Stomach (tissue), 19 donors: ENCODE measurements at regions of chr19 and their contacts with region 1.

Region 1: DNA sequence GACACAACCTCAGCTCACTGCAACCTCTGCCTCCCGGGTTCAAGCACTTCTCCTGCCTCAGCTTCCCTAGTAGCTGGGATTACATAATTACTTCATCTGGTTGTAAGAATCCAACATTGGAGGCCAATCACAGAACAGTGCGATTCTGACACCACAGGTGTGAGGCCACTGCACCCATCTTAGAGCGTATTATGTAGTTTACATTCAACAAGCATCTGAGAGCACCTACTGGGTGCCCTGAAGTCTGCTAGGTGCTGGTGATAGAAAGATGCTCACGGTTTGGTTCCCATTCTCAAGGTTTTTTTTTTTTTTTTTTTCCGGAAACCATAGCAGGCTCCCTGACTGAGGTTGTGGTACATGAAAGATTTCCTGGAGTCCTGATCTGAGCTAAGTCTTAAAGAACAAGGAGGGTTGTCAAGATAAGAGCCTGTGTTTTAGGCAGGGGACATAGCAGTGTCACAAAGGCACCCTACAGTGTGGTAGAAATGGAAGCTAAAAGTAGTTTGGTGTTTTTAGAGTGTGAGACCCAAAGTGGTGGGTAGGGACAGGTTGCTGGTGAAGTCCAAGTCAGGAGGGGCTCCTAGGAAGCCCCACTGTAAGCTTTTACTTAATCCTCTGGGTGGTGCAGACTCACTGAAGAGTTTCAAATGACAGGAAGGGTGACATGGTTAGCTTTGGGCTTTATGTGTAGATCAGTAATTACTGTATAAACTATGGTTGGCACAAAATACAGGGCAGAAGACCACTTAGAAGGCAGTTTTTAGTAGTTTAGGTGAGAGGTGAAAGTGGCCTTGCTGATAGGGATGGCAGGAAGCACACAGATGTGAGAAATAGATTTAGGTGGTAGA is 15.2 kb downstream of the SAE1 start:
- DNase-seq: peak in 1 of 2 donors; percentile 12
- H3K4me3 ChIP-seq: no peak overlapping the region
- H3K27ac ChIP-seq: peak overlapping the region in 2 of 5 donors; percentile 9 to 46
- H3K4me1 ChIP-seq: peaks cover 8 to 46% (median 22%) of the 10 kb centered on the region in 4 donors
- H3K27me3 ChIP-seq: no peaks in the 10 kb centered on the region
- CTCF ChIP-seq: no peak
- EP300 ChIP-seq: no peak
- POLR2A ChIP-seq: no peak

Region 2: DNA sequence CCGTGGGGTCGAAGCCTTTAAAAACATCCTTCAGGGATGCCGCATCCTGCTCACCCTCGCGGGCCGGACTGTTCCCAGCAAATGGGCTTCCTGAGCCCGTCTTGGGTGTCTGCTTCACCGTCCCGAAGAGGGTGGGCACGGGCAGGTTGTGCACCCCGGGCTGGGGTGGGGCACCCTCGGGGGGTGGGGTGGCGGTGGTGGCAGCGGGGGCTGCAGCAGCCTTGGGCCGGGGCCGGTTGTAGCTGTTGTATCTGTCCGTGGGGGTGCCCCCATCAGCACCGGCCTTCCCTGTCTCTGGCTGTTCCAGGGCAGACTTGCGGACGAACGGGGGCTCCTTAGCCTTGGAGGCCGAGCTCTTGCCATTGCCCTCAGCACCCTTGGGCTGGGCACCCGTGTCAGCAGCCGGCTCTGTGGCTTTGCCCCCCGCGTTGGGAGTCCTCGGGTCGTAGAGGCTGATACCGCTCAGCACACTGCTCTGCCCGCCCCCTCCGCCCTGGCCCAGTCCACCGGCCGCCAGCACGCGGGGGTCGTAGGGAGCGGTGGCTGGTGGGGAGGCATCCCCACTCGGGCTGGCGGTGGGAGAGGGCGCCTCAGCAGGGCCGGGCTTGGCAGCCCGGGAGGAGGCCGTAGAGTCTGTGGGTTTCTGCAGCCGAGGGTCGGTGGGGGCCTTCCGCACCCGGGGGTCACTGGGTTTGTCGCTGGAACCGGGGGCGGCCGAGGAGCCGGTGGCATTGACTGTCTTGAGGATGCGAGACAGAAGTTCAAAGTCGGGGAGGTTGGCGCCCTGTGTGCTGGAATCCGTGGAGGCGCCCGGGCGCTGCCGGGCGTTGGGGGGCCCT is 79.3 kb before region 1 on chr19:
- intact Hi-C with region 1: no loop called
- DNase-seq: no peak
- H3K4me3 ChIP-seq: no peak overlapping the region
- H3K27ac ChIP-seq: no peak overlapping the region
- H3K4me1 ChIP-seq: peaks cover 0 to 3% (median 0%) of the 10 kb centered on the region in 4 donors
- H3K27me3 ChIP-seq: no peaks in the 10 kb centered on the region
- CTCF ChIP-seq: no peak
- EP300 ChIP-seq: no peak
- POLR2A ChIP-seq: no peak

Region 3: GRCh38 chr19:47094557-47095475 is 51.0 kb before region 1 on chr19:
- intact Hi-C with region 1: no loop called
- DNase-seq: peak; percentile 48 to 84
- H3K4me3 ChIP-seq: no peak overlapping the region
- H3K27ac ChIP-seq: peak overlapping the region; percentile 82 to 87 (median 85)
- H3K4me1 ChIP-seq: peaks cover 53 to 67% (median 63%) of the 10 kb centered on the region in 4 donors
- H3K27me3 ChIP-seq: no peaks in the 10 kb centered on the region
- CTCF ChIP-seq: no peak
- EP300 ChIP-seq: no peak
- POLR2A ChIP-seq: no peak

Region 4: DNA sequence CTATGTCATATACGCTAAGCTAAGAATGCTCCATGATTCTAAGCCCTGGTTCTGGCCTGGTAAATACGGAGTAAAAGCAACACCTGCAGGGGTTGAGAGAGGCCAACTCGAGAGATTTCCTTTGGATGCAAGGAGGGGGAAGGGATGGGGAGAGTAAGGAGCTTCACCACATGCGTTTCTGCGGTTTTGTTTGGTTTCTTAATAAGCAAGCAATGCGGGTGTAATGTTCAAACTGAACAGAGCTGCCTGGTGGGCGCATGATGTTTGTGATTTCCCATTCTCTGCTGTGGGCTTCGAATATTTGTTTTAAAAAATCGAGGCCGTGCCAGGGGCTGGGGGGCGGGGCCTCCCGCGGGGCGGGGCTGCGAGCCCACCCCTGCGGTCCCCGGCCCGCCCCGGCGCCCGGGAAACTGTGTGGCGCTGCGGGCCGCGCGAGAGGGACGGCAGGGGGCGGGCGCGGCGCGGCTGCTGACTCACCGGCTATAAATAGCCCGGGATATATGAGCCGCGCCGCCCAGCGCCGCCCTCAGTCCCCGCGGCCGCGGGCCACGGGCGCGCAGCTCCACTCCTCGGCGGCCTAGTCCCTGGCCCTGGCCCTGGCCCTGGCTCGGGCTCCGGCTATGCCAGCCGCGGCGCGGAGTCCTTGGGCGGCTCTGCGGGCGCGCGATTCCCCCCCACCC is 80.0 kb after region 1 on chr19:
- intact Hi-C with region 1: no loop called
- DNase-seq: peak; percentile 93 to 97
- H3K4me3 ChIP-seq: peak overlapping the region; percentile 57 to 99 (median 86)
- H3K27ac ChIP-seq: peak overlapping the region; percentile 96 to 100 (median 99)
- H3K4me1 ChIP-seq: peaks cover 44 to 54% (median 49%) of the 10 kb centered on the region in 4 donors
- H3K27me3 ChIP-seq: no peaks in the 10 kb centered on the region
- CTCF ChIP-seq: peak in 3 of 7 experiments; percentile 23 to 81 (median 38)
- EP300 ChIP-seq: no peak
- POLR2A ChIP-seq: peak in 1 of 4 donors; percentile 76

Region 5: GRCh38 chr19:47247329-47247886 is 101.5 kb after region 1 on chr19:
- intact Hi-C with region 1: loop called (anchors 5 kb)
- DNase-seq: peak; percentile 85 to 92
- H3K4me3 ChIP-seq: no peak overlapping the region
- H3K27ac ChIP-seq: no peak overlapping the region
- H3K4me1 ChIP-seq: peaks cover 19 to 39% (median 29%) of the 10 kb centered on the region in 4 donors
- H3K27me3 ChIP-seq: no peaks in the 10 kb centered on the region
- CTCF ChIP-seq: peak in 5 of 7 experiments; percentile 82 to 97 (median 89)
- EP300 ChIP-seq: no peak
- POLR2A ChIP-seq: no peak